ENCODE measurements at regions of chr11 and their contacts with region 1.

Region 1: GRCh38 chr11:9972989-9973388 is 309.1 kb downstream of the SWAP70 start:
- DNase-seq: no peak

Region 2: DNA sequence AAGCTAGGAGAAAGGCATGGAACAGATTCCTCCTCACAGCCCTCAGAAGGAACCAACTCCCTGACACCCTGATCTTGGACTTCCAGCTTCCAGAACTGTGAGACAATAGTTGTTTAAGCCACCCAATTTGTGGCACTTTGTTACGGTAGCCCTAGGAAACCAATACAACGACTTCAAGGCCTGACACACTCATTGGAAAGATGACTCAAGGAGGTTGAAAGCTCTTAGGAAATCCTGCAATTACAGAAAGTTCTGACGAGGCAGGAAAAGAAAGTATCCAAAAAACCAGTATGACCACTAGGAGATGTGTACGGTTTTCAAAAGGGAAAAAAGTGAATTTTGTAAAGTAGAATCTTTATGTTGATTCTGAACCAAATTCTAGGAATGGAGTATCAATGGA is 147.7 kb before region 1 on chr11:
- intact Hi-C with region 1: no loop called
- DNase-seq: no peak

Region 3: DNA sequence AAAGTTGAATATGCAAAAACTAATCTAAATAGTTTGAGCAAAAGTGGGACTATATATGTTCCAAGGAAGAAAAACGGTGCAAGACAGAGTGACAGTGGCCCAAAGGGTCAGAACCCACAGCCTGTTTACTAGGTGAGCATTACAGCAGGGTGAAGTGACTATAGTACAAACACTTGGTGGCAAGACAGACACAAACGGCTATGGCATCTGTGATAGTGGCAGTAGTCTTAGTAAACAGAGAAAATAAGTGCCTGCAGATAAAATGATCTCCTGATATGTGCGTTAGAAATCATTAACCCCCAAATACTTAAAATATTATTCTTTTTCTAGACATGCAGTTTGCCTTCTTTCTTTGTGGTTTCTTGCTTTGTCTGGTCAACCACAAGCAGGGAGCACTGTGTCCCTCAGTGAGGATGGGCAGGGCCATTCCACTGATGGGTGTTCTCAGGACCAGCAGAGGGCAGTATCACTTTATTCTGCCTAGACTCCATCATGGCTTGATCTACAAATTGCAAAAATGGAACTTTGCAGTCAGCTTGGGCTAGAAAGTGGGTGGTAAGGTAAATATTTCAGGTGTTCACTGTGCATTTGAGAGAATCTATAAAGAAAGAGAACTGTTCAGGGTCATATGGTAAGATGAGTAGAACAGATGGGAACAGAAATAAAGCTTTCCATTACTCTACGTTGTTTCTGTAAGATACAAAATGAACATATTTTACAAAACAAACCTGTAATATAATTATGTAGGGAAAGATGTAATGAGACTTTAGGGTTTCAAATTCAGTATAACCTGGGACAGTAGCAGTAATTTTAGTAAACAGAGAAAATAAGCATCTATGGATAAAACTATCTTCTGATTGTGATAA is 110.9 kb before region 1 on chr11:
- intact Hi-C with region 1: loop called (anchors 10 kb)
- DNase-seq: peak in 7 of 10 donors; percentile 12 to 81 (median 30)

Measured in posterior cingulate gyrus (tissue), 11 donors.